ENCODE measurements at regions of chr5 and their contacts with region 1.

Region 1: DNA sequence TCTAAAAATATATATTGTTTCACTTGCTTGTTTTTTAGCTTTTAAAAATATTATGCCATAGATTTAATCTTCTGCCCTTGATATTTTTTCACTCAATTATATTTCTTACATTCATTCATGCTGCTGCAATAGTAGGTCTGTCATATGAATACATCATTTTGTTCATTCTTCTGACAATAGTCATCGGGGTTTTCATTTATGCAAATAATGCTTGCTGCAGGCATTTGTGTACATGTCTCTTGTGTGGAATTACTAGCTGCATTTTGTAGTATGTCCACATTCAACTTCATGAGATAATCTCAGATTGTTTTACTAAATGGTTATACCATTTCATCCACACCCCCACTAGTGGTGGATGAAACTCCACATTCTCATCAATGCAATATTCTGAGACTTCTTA is 5.3 kb upstream of the PLPP1 start:
- DNase-seq: no peak
- ATAC-seq: no peak
- H3K4me3 Mint-ChIP-seq: no peak overlapping the region
- H3K27ac Mint-ChIP-seq: no peak overlapping the region
- H3K4me1 Mint-ChIP-seq: peaks cover 46% of the 10 kb centered on the region
- H3K27me3 Mint-ChIP-seq: no peaks in the 10 kb centered on the region
- CTCF ChIP-seq: no peak

Region 2: DNA sequence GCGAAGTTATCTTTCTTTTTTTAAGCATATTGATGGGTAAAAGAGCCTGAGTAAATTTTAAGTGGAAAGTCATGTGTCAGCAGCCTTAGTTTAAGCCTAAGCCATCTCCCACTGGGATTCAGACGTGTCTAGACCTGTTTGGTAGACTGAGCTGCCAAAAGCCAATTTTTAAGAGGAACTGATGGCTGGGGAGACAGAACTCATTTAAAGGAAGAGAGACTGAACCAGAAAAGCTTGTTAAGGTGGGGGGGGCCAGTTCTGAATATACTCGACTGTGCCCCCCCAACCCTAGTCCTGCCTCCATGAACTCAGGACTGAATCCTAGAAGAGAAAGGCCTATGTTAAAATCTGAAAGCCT is 53.1 kb after region 1 on chr5:
- CTCF ChIA-PET with region 1: no interaction called
- POLR2A ChIA-PET with region 1: interaction called, 3 read pairs
- intact Hi-C with region 1: loop called (anchors 5 kb)
- DNase-seq: no peak
- ATAC-seq: no peak
- H3K4me3 Mint-ChIP-seq: no peak overlapping the region
- H3K27ac Mint-ChIP-seq: peak overlapping the region; percentile 30
- H3K4me1 Mint-ChIP-seq: peaks cover 34% of the 10 kb centered on the region
- H3K27me3 Mint-ChIP-seq: no peaks in the 10 kb centered on the region
- CTCF ChIP-seq: no peak

Measured in activated CD8-positive, alpha-beta T cell treated with anti-CD3 and anti-CD28 coated beads for 36 hours (primary cell).